ENCODE measurements at regions of chr13 and their contacts with region 1.

Region 1: GRCh38 chr13:99436686-99437416 is 64.4 kb upstream of the TM9SF2 start:
- DNase-seq: peak; percentile 26
- H3K4me3 ChIP-seq: peak overlapping the region; percentile 36
- CTCF ChIP-seq: peak; percentile 99

Region 2: DNA sequence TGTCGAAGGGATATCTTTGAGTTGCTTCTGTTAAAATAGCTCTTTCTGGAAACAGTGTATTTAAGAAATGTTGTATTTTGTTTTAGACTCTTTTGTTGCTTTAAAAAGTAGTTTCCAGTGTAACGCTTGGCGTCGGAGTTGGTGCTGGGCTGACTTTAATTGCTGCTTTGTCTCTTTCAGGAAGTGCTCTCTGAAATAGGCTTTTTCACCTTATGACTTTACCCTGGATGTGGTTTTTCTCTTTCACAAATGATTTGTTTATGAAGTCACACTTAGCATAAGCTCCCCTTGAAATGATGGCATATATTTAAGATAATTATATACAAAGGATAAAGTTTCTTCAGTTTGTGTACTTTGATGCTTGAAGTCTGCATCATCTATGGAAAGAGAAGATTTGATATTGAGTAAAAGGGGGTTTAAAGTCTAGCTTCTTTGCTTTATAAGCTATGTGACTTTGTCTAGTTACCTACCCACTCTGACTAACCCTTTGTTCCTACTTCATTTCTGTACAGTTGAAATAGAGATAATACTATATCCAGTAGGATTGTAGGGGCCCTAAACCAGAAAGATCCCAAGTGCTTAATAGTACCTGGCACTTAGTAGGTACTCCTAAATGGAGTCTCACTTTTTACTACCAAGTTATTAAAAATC is 178.5 kb before region 1 on chr13 and contains the start of gene GPR18:
- CTCF ChIA-PET with region 1: interaction called, 1,002 read pairs
- POLR2A ChIA-PET with region 1: no interaction called
- DNase-seq: no peak
- H3K4me3 ChIP-seq: no peak within 1 kb of the TSS
- CTCF ChIP-seq: no peak

Region 3: DNA sequence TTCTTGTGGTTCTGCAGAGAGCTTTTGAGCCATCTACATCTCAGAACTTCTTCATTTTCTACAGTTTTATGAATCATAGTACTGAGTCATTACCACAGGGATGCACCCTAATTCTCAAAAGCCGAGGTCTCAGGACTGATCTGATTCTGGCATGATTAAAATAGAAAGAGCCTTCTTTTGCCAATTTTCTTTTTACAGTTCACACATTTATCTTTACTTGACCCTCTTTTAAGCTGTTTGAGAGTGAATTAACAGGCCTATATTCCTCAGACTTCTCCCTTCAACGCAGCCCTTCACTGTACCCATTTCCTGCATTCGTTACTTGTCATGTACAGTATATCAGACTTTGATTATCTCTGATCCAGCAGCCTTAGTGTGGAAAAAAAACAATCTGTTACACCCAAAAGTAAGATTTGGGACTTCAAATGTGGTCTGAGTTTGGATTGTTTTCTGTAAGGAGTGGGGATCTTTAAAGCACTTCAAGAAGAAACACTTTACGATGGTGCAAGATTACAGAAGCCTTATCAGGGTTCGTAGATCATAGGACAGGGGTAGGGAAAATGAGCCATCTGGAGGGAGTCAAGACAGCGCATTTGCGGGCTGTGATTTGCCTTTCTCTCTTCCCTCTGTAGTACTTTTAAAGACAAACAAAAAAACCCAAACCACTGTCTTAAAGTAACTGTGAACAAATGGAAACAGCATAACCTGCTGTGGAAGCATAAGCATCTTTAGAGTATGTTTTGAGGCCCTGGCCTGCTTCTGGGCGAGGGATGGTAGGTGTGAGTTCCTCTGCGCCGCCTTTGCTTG is 114.4 kb before region 1 on chr13:
- CTCF ChIA-PET with region 1: interaction called, 10 read pairs
- POLR2A ChIA-PET with region 1: no interaction called
- DNase-seq: peak; percentile 59
- H3K4me3 ChIP-seq: no peak overlapping the region
- CTCF ChIP-seq: no peak

Region 4: GRCh38 chr13:99386911-99387788 is 49.7 kb before region 1 on chr13:
- CTCF ChIA-PET with region 1: interaction called, 14 read pairs
- POLR2A ChIA-PET with region 1: no interaction called
- DNase-seq: no peak
- H3K4me3 ChIP-seq: no peak overlapping the region
- CTCF ChIP-seq: peak; percentile 37

Region 5: DNA sequence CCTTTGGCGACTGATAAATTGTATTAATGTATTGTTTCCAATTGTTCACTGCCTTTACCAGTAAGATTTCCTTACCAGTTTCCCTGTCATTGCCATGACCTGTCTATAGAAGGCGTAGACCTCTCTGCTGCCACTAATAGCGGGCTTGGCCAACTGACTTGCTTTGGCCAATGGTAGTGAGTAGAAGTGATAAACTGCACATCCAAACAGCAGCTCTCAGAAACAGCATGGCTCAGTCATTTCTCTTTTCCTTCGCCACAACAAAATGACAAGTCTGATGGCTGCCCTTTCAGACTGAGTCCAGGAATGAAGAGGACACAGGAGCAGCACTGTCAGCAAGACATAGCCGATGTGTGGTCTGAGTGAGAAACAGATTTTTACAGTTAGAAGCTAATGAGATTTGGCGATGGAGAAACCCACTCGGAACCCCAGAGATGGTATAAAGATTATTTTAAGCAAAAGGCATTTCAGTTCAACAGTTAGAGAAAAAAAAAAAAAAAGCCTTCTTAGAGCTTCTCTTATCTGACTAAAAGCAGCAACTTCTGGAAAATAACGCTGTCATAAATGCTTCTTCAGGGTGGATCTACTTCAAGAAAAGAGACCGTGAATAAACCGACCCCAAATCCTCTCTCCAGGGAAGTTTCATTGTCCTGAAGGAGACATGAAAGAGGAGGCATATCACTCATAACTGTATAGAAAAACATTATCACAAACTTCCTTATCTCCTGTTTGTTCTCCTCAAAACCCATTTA is 22.4 kb after region 1 on chr13:
- CTCF ChIA-PET with region 1: interaction called, 21 read pairs
- POLR2A ChIA-PET with region 1: no interaction called
- DNase-seq: no peak
- H3K4me3 ChIP-seq: no peak overlapping the region
- CTCF ChIP-seq: no peak

Region 6: GRCh38 chr13:99516153-99516929 is 79.5 kb after region 1 on chr13:
- CTCF ChIA-PET with region 1: interaction called, 10 read pairs
- POLR2A ChIA-PET with region 1: no interaction called
- DNase-seq: no peak
- H3K4me3 ChIP-seq: no peak overlapping the region
- CTCF ChIP-seq: no peak

Measured in AG04449 (cell line).